ENCODE measurements at regions of chr2 and their contacts with region 1.

Region 1: DNA sequence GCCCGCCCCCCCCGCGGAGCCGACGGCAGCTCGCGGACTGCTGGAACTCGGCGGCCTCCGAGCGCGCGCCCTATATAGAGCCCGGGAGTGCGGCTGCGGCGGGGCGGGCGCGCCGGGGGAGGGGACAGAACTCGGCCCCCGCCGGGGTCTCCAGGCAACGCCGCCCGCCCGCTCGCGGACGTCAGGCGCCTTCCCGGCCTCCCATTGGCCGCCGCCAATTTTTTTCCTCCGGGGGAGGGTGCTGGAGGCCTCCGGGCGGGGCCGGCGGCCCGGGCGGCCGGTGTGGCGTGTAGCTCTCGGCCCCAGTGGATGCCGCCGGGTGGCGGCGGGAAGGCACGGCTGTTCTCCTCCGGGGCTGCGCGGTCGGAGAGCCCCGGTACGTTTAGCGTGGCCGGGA is at the start of gene ZFP36L2:
- DNase-seq: peak; percentile 78 to 96
- H3K4me3 ChIP-seq: peak within 1 kb of the TSS; percentile 81 to 89
- H3K27ac ChIP-seq: peak within 1 kb of the TSS; percentile 98
- H3K4me1 ChIP-seq: peaks cover 6 to 17% of the 10 kb centered on the region in 2 donors
- H3K27me3 ChIP-seq: no peaks in the 10 kb centered on the region
- CTCF ChIP-seq: peak in 1 of 3 experiments; percentile 19
- total RNA-seq, gene ZFP36L2: 148 TPM

Region 2: DNA sequence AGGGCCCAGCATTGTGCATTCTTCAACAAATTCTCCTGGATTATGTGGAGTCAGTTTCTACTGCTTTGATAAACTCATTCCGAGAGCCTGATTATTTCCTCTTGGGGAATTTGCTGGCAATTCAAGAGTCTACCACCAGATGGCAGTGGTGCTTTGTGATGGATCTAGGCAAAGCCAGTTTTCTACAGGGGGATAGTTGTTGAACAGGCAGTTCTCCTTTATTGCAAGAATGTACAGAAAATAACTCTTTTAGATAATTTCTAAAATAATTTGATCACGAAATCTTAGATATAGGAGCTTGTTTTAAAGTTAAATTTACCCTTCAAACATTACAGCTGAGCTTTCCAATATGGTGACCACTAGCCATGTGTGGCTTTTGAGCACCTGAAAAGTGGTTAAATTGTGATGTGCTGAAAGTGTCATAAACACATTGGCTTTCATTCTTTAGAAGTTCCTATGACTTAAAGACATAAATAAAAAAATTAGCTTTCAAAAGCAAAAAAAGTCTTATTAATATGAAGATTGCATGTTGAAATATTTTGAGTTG is 367.5 kb before region 1 on chr2:
- intact Hi-C with region 1: loop called (anchors 2 kb)
- DNase-seq: peak in 1 of 2 donors; percentile 88
- H3K4me3 ChIP-seq: no peak overlapping the region
- H3K27ac ChIP-seq: peak overlapping the region in 1 of 2 donors; percentile 34
- H3K4me1 ChIP-seq: peaks cover 5 to 6% of the 10 kb centered on the region in 2 donors
- H3K27me3 ChIP-seq: no peaks in the 10 kb centered on the region
- CTCF ChIP-seq: peak; percentile 89 to 91 (median 90)

Region 3: DNA sequence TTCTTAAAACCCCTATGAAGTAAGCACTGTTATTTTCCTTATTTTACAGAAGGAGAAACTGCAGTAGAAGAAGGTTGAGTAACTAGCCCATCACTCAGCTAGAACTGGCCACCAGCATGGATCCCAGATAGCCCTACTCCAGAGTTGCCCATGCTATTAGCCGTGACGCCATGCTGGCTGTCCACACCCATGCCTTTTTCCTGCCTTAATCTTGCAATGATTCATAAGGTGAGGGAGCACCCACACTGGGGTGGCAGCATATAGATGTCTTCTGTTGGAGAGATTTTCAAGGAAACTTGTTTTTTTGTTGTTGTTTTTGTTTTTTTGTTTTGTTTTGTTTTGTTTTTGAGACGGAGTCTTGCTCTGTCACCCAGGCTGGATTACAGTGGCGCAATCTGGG is 230.0 kb before region 1 on chr2:
- intact Hi-C with region 1: no loop called
- DNase-seq: peak in 1 of 2 donors; percentile 19
- H3K4me3 ChIP-seq: no peak overlapping the region
- H3K27ac ChIP-seq: no peak overlapping the region
- H3K4me1 ChIP-seq: no peaks in the 10 kb centered on the region
- H3K27me3 ChIP-seq: no peaks in the 10 kb centered on the region
- CTCF ChIP-seq: no peak

Region 4: DNA sequence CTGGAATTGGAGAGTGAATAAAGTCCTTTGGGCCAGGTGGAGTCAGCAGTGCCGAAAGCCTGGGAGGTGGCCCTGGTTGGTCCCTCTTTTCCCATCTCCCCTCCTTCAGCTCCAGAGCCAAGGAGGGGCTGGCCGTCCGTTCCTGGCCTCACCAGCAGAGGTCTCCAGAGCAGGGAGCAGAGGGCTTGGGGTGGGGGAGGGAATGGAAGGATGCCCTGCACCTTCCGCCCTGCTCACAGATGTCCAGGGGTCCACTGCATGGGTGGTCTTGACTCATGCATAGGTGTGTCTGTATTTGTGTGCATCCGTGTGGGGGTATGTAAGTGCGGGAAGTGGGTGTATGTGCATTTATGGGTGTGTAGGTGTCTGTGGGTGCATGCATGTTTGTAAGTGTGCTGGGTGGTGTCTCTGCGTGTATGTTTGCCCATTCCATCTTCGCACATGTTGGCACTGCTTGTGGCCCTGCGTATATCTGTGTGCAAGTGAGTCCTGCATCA is 202.0 kb before region 1 on chr2:
- intact Hi-C with region 1: loop called (anchors 2 kb)
- DNase-seq: peak; percentile 33 to 80
- H3K4me3 ChIP-seq: no peak overlapping the region
- H3K27ac ChIP-seq: no peak overlapping the region
- H3K4me1 ChIP-seq: no peaks in the 10 kb centered on the region
- H3K27me3 ChIP-seq: no peaks in the 10 kb centered on the region
- CTCF ChIP-seq: peak; percentile 84 to 93 (median 89)

Region 5: DNA sequence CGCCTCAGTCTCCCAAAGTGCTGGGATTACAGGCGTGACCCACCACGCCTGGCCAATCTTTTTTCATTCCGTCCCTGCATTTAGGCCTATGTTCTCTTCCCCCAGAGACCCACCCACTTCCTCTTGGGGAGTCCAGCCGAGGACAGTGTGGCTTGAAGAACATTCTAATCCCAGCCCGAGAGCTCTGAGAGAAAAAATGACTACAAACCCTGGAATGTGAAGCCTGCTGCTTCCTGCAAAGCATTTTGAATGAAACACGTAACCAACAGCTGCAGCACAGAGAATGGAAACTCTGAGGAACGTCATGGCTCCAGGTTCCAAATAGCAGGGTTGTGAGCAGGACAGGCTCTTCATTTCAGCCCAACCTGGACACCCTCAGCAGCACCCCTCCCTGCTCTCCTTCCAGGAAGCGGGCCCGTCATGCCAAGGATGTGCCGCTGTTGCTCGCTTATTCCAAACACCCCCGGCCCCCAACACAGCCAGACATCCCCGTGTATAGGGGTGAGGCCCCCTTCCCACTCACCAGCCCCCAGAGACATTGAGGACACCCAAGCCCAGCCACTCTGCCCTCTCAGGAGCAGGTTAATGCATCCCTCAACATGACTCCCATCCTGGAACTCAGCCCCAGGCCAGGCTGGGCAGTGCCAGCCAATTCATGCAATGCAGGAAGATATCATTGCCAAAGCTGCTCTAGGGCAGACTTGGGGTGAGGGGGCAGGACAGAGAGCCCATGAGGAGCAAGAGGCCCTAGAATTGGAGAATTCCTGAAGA is 139.9 kb before region 1 on chr2:
- intact Hi-C with region 1: loop called (anchors 2 kb)
- DNase-seq: peak; percentile 80 to 96
- H3K4me3 ChIP-seq: no peak overlapping the region
- H3K27ac ChIP-seq: peak overlapping the region; percentile 96 to 97
- H3K4me1 ChIP-seq: peaks cover 33 to 63% of the 10 kb centered on the region in 2 donors
- H3K27me3 ChIP-seq: no peaks in the 10 kb centered on the region
- CTCF ChIP-seq: no peak

Region 6: GRCh38 chr2:43300840-43301583 is 74.5 kb after region 1 on chr2:
- intact Hi-C with region 1: loop called (anchors 5 kb)
- DNase-seq: peak in 1 of 2 donors; percentile 80
- H3K4me3 ChIP-seq: peak overlapping the region in 1 of 2 donors; percentile 8
- H3K27ac ChIP-seq: peak overlapping the region; percentile 70 to 84
- H3K4me1 ChIP-seq: peaks cover 18 to 56% of the 10 kb centered on the region in 2 donors
- H3K27me3 ChIP-seq: no peaks in the 10 kb centered on the region
- CTCF ChIP-seq: no peak

Region 7: GRCh38 chr2:43542285-43542937 is 315.9 kb after region 1 on chr2:
- intact Hi-C with region 1: loop called (anchors 2 kb)
- DNase-seq: no peak
- H3K4me3 ChIP-seq: no peak overlapping the region
- H3K27ac ChIP-seq: peak overlapping the region in 1 of 2 donors; percentile 38
- H3K4me1 ChIP-seq: peaks cover 3 to 32% of the 10 kb centered on the region in 2 donors
- H3K27me3 ChIP-seq: no peaks in the 10 kb centered on the region
- CTCF ChIP-seq: peak; percentile 61 to 79 (median 62)